ENCODE measurements at regions of chr3 and their contacts with region 1.

Region 1: GRCh38 chr3:95434491-95434890 is 1371.6 kb downstream of the NSUN3 start:
- DNase-seq: no peak
- ATAC-seq: no peak

Region 2: GRCh38 chr3:95654570-95655362 is 220.3 kb after region 1 on chr3:
- intact Hi-C with region 1: loop called in 1 of 2 experiments (anchors 5 kb)
- DNase-seq: no peak
- ATAC-seq: no peak